T-cell (primary cell): ENCODE measurements at regions of chr10 and their contacts with region 1.

Region 1: DNA sequence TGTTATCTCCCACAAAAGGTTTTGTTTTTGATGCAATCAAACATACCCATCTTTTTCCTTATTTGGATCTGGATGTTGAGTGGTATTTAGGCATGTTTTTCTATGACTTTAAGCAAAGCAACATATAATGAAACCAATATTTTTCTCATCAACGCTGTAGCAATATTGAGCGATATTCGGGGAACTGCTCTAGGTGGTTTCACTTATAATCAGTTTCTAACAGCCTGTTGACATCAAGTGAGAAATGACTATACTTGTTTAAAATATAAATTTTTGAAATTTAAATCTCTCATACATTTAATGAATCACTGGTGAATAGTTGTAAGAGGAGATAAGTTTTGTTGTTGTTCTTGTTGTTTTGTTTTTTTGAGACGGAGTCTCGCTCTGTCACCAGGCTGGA is 52.8 kb upstream of the CCAR1 start:
- DNase-seq: no peak
- ATAC-seq: no peak
- H3K4me3 ChIP-seq: no peak overlapping the region
- H3K4me3 Mint-ChIP-seq: no peak overlapping the region
- H3K27ac ChIP-seq: no peak overlapping the region
- H3K27ac Mint-ChIP-seq: no peak overlapping the region
- H3K4me1 ChIP-seq: no peaks in the 10 kb centered on the region
- H3K4me1 Mint-ChIP-seq: peaks cover 0 to 2% (median 0%) of the 10 kb centered on the region in 3 donors
- H3K27me3 ChIP-seq: no peaks in the 10 kb centered on the region
- H3K27me3 Mint-ChIP-seq: no peaks in the 10 kb centered on the region

Region 2: DNA sequence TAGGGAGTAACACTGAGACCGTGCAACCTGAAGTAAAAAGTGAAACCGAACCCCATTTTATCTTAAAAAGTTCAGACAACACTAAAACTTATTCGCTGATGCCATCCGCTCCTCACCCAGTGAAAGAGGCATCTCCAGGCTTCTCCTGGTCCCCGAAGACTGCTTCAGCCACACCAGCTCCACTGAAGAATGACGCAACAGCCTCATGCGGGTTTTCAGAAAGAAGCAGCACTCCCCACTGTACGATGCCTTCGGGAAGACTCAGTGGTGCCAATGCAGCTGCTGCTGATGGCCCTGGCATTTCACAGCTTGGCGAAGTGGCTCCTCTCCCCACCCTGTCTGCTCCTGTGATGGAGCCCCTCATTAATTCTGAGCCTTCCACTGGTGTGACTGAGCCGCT is 22.6 kb after region 1 on chr10:
- CTCF ChIA-PET with region 1: interaction called in 1 of 2 experiments, 3 read pairs
- POLR2A ChIA-PET with region 1: interaction called in 1 of 2 experiments, 10 read pairs
- DNase-seq: no peak
- ATAC-seq: no peak
- H3K4me3 ChIP-seq: no peak overlapping the region
- H3K4me3 Mint-ChIP-seq: no peak overlapping the region
- H3K27ac ChIP-seq: no peak overlapping the region
- H3K27ac Mint-ChIP-seq: no peak overlapping the region
- H3K4me1 ChIP-seq: no peaks in the 10 kb centered on the region
- H3K4me1 Mint-ChIP-seq: no peaks in the 10 kb centered on the region
- H3K27me3 ChIP-seq: no peaks in the 10 kb centered on the region
- H3K27me3 Mint-ChIP-seq: no peaks in the 10 kb centered on the region

Region 3: GRCh38 chr10:69567920-69568319 is 899.7 kb after region 1 on chr10:
- CTCF ChIA-PET with region 1: no interaction called
- POLR2A ChIA-PET with region 1: no interaction called
- DNase-seq: peak in 10 of 35 experiments; percentile 12 to 28 (median 15)
- ATAC-seq: no peak
- H3K4me3 ChIP-seq: no peak overlapping the region
- H3K4me3 Mint-ChIP-seq: no peak overlapping the region
- H3K27ac ChIP-seq: no peak overlapping the region
- H3K27ac Mint-ChIP-seq: peak overlapping the region in 1 of 2 donors; percentile 49
- H3K4me1 ChIP-seq: peaks cover 0 to 16% of the 10 kb centered on the region in 2 experiments
- H3K4me1 Mint-ChIP-seq: peaks cover 9 to 17% (median 12%) of the 10 kb centered on the region in 3 donors
- H3K27me3 ChIP-seq: peaks cover 31 to 70% of the 10 kb centered on the region in 2 experiments
- H3K27me3 Mint-ChIP-seq: peaks cover 64 to 78% of the 10 kb centered on the region in 2 donors